ENCODE measurements at regions of chr6 and their contacts with region 1.

Region 1: GRCh38 chr6:160992061-160992979 is 751 bp downstream of the MAP3K4 start:
- DNase-seq: peak in 12 of 14 experiments; percentile 3 to 75 (median 30)
- ATAC-seq: peak; percentile 65
- H3K4me3 ChIP-seq: peak overlapping the region; percentile 96
- H3K4me3 Mint-ChIP-seq: peak overlapping the region; percentile 97
- H3K27ac ChIP-seq: peak overlapping the region; percentile 72 to 83
- H3K27ac Mint-ChIP-seq: peak overlapping the region; percentile 90
- H3K4me1 ChIP-seq: peaks cover 16% of the 10 kb centered on the region
- H3K4me1 Mint-ChIP-seq: peaks cover 55% of the 10 kb centered on the region
- H3K27me3 ChIP-seq: no peaks in the 10 kb centered on the region
- H3K27me3 Mint-ChIP-seq: peaks cover 4% of the 10 kb centered on the region
- CTCF ChIP-seq: peak; percentile 59

Region 2: DNA sequence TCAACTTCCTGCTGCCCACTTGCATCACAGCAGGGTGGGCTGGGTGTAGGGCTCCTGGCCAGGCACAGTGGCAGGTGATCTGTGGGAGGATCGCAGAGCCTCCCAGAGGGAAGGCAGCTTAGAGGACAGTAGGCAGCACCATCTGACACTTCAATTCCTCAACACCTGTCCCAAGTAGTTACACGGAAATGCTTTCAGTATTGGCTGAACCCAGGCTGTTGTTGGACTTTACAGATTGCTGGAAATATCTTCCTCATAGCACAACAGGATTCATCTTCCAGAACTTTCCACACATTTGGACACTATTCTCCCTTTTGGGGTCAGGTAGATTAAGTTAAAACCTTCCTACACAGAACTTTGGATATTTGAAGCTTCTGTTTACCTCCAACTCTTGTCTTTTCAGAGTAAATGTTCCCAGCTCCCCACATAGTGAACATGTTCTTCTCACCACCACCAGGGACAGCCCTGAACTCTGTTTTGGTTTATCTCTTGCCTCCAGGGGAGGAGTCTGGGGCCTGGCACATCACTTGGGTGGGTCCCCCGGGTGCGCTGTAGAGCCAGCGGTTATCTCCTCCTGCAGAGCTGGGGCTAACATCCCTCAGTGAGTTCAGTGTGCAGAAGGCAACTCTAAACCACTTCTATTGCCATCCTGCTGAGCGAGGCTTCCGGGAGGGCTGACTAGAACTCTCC is 730.2 kb before region 1 on chr6:
- CTCF ChIA-PET with region 1: no interaction called
- POLR2A ChIA-PET with region 1: no interaction called
- intact Hi-C with region 1: no loop called
- DNase-seq: peak in 1 of 14 experiments; percentile 11
- ATAC-seq: no peak
- H3K4me3 ChIP-seq: no peak overlapping the region
- H3K4me3 Mint-ChIP-seq: no peak overlapping the region
- H3K27ac ChIP-seq: no peak overlapping the region
- H3K27ac Mint-ChIP-seq: no peak overlapping the region
- H3K4me1 ChIP-seq: no peaks in the 10 kb centered on the region
- H3K4me1 Mint-ChIP-seq: peaks cover 8% of the 10 kb centered on the region
- H3K27me3 ChIP-seq: no peaks in the 10 kb centered on the region
- H3K27me3 Mint-ChIP-seq: peaks cover 33% of the 10 kb centered on the region
- CTCF ChIP-seq: no peak

Region 3: GRCh38 chr6:160520043-160520904 is 472.0 kb before region 1 on chr6:
- CTCF ChIA-PET with region 1: no interaction called
- POLR2A ChIA-PET with region 1: no interaction called
- intact Hi-C with region 1: loop called in 1 of 2 experiments (anchors 10 kb)
- DNase-seq: peak; percentile 32 to 84 (median 67)
- ATAC-seq: peak; percentile 79
- H3K4me3 ChIP-seq: peak overlapping the region; percentile 83
- H3K4me3 Mint-ChIP-seq: peak overlapping the region; percentile 98
- H3K27ac ChIP-seq: peak overlapping the region; percentile 39 to 69
- H3K27ac Mint-ChIP-seq: peak overlapping the region; percentile 85
- H3K4me1 ChIP-seq: peaks cover 16% of the 10 kb centered on the region
- H3K4me1 Mint-ChIP-seq: peaks cover 34% of the 10 kb centered on the region
- H3K27me3 ChIP-seq: no peaks in the 10 kb centered on the region
- H3K27me3 Mint-ChIP-seq: no peaks in the 10 kb centered on the region
- CTCF ChIP-seq: peak; percentile 62

Region 4: GRCh38 chr6:161074496-161075121 is 82.3 kb after region 1 on chr6:
- CTCF ChIA-PET with region 1: no interaction called
- POLR2A ChIA-PET with region 1: interaction called, 16 read pairs
- intact Hi-C with region 1: loop called (anchors 5 kb)
- DNase-seq: no peak
- ATAC-seq: no peak
- H3K4me3 ChIP-seq: no peak overlapping the region
- H3K4me3 Mint-ChIP-seq: peak overlapping the region; percentile 47
- H3K27ac ChIP-seq: peak overlapping the region in 1 of 2 donors; percentile 92
- H3K27ac Mint-ChIP-seq: no peak overlapping the region
- H3K4me1 ChIP-seq: peaks cover 50% of the 10 kb centered on the region
- H3K4me1 Mint-ChIP-seq: peaks cover 9% of the 10 kb centered on the region
- H3K27me3 ChIP-seq: no peaks in the 10 kb centered on the region
- H3K27me3 Mint-ChIP-seq: no peaks in the 10 kb centered on the region
- CTCF ChIP-seq: no peak

Region 5: GRCh38 chr6:161111261-161111660 is 118.9 kb after region 1 on chr6:
- CTCF ChIA-PET with region 1: no interaction called
- POLR2A ChIA-PET with region 1: no interaction called
- intact Hi-C with region 1: loop called in 1 of 2 experiments (anchors 5 kb)
- DNase-seq: peak in 6 of 14 experiments; percentile 14 to 67 (median 41)
- ATAC-seq: peak; percentile 98
- H3K4me3 ChIP-seq: no peak overlapping the region
- H3K4me3 Mint-ChIP-seq: peak overlapping the region; percentile 27
- H3K27ac ChIP-seq: peak overlapping the region in 1 of 2 donors; percentile 30
- H3K27ac Mint-ChIP-seq: peak overlapping the region; percentile 91
- H3K4me1 ChIP-seq: peaks cover 13% of the 10 kb centered on the region
- H3K4me1 Mint-ChIP-seq: peaks cover 33% of the 10 kb centered on the region
- H3K27me3 ChIP-seq: no peaks in the 10 kb centered on the region
- H3K27me3 Mint-ChIP-seq: no peaks in the 10 kb centered on the region
- CTCF ChIP-seq: no peak

Region 6: DNA sequence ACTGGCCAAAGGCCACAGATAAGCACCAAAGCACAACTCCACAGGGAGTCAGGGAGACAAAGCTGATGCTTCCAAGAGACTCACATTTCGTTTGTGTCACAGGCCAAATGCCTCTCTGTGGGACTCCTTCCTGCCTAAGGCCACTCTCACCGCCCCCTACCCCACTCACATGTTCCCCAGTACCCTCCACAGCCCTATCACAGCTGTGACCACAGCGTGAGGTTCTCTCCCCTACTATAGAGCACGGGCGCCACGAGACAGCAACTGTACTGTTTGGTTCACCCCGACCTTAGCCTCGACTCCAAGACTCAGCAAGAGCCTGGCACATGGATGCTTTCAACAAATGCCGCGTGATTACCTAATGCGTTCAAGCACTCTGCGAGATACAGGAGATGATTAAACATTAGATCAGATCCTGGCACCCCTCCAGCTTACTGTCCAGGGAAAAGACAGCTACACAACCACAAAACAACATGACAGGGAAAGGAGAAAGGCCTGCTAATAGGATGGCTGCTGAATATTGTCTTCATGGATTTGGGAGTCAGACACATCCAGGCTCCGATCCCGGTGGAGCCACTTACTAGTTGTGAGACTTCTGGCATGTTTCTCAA is 176.1 kb after region 1 on chr6:
- CTCF ChIA-PET with region 1: no interaction called
- POLR2A ChIA-PET with region 1: no interaction called
- intact Hi-C with region 1: no loop called
- DNase-seq: no peak
- ATAC-seq: no peak
- H3K4me3 ChIP-seq: no peak overlapping the region
- H3K4me3 Mint-ChIP-seq: no peak overlapping the region
- H3K27ac ChIP-seq: no peak overlapping the region
- H3K27ac Mint-ChIP-seq: no peak overlapping the region
- H3K4me1 ChIP-seq: no peaks in the 10 kb centered on the region
- H3K4me1 Mint-ChIP-seq: no peaks in the 10 kb centered on the region
- H3K27me3 ChIP-seq: no peaks in the 10 kb centered on the region
- H3K27me3 Mint-ChIP-seq: no peaks in the 10 kb centered on the region
- CTCF ChIP-seq: no peak

Region 7: DNA sequence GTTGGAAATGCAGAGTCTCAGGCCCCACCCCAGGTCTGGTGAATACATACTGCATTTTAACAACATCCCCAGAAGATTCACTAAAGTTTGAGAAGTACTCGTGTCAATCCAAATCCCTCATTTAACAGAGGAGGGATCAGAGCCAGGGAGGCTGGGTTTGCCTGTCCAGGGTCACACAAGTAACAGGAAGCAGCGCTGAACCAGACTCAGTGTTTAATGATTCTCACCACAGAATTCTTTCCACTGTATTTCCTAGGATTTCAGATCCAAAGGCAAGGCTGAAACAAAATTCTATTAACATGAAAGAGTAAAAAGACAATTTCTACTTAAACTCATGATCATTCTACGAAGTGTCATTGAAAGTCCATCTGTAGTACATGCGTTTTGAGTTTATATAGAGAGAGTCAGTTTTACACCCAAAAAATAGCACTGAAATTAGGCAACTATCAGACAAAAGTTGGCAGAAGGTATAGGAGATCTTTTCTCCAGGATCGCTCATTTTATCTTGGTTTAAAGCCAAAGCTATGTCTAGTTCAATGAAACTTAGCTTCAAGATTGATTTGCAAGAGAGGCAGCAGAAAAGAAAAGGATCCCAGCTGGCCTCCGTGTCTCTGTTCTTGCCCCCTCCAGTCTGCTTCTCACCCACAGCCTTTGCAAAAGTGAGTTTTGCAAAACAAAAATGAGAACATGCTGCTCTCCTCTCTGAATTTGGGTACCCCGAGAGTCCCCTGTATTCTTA is 287.5 kb after region 1 on chr6:
- CTCF ChIA-PET with region 1: no interaction called
- POLR2A ChIA-PET with region 1: interaction called, 18 read pairs
- intact Hi-C with region 1: loop called (anchors 2 to 5 kb)
- DNase-seq: no peak
- ATAC-seq: no peak
- H3K4me3 ChIP-seq: no peak overlapping the region
- H3K4me3 Mint-ChIP-seq: no peak overlapping the region
- H3K27ac ChIP-seq: no peak overlapping the region
- H3K27ac Mint-ChIP-seq: no peak overlapping the region
- H3K4me1 ChIP-seq: no peaks in the 10 kb centered on the region
- H3K4me1 Mint-ChIP-seq: no peaks in the 10 kb centered on the region
- H3K27me3 ChIP-seq: no peaks in the 10 kb centered on the region
- H3K27me3 Mint-ChIP-seq: no peaks in the 10 kb centered on the region
- CTCF ChIP-seq: no peak

Measured in CD4-positive, alpha-beta T cell (primary cell).